Activated CD8-positive, alpha-beta T cell treated with anti-CD3 and anti-CD28 coated beads, Interleukin-2, amount 10 ng/mL, durations not matched to agents 7 days and 5 days (primary cell): ENCODE measurements at regions of chr5 and their contacts with region 1.

Region 1: DNA sequence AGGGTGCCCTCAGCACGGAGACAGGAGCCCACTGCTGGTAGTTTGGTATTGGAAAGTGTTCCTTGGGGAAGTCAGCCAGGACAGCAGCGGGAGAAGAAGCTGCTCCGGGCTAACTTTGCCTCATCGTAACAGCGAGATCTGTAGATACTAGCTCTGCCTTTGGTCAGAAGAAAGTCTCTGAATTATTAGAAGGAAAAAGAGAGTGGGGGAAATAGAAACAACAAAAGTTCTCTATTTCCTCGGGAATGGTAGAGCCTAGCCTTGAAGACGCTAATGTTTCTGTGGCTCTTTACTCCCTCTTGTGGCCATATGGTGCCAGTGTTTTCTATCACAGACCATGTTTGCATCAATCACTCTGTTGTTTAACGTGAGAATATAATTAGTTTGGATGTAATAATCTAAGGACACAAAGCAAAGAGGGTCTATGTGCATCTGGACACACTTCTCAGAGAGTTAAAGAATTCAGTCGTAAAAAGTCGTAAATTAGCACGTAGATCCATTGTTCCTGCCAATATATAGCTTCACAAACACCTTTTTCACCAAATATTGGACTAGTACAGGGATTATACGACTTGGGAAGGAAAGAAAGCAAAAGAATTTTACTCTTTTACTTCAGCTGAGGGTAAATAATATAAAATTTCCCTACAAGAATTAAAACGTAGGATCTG is 40.2 kb upstream of the HSD17B4 start:
- DNase-seq: peak; percentile 73
- ATAC-seq: peak; percentile 87
- H3K4me3 Mint-ChIP-seq: peak overlapping the region; percentile 72
- H3K27ac Mint-ChIP-seq: peak overlapping the region; percentile 0
- H3K4me1 Mint-ChIP-seq: peaks cover 24% of the 10 kb centered on the region
- H3K27me3 Mint-ChIP-seq: no peaks in the 10 kb centered on the region

Region 2: GRCh38 chr5:119031905-119032304 is 380.2 kb before region 1 on chr5:
- CTCF ChIA-PET with region 1: interaction called, 102 read pairs
- POLR2A ChIA-PET with region 1: no interaction called
- DNase-seq: no peak
- ATAC-seq: no peak
- H3K4me3 Mint-ChIP-seq: no peak overlapping the region
- H3K27ac Mint-ChIP-seq: peak overlapping the region; percentile 79
- H3K4me1 Mint-ChIP-seq: peaks cover 22% of the 10 kb centered on the region
- H3K27me3 Mint-ChIP-seq: no peaks in the 10 kb centered on the region

Region 3: DNA sequence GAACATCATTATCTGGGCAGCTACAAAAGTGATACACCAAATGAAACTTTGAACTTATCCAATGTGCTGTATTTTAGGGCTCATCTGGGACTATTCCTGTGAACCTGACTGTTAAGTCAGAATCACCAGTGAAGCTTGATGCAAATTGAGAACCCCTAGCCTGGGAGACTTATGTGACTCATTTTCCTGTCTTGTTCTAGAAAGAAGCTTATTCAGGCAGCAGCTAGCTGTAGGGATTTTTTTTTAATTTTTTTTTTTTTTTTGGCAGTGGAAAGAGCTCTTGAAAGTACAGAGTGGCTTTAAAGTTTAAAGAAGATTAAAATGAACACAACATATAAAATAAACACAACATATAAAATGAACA is 137.3 kb before region 1 on chr5:
- CTCF ChIA-PET with region 1: interaction called, 28 read pairs
- POLR2A ChIA-PET with region 1: no interaction called
- DNase-seq: no peak
- ATAC-seq: peak; percentile 35
- H3K4me3 Mint-ChIP-seq: peak overlapping the region; percentile 75
- H3K27ac Mint-ChIP-seq: peak overlapping the region; percentile 87
- H3K4me1 Mint-ChIP-seq: peaks cover 88% of the 10 kb centered on the region
- H3K27me3 Mint-ChIP-seq: peaks cover 2% of the 10 kb centered on the region

Region 4: GRCh38 chr5:119315516-119315949 is 96.5 kb before region 1 on chr5:
- CTCF ChIA-PET with region 1: interaction called, 90 read pairs
- POLR2A ChIA-PET with region 1: interaction called, 4 read pairs
- DNase-seq: peak; percentile 74
- ATAC-seq: peak; percentile 77
- H3K4me3 Mint-ChIP-seq: peak overlapping the region; percentile 40
- H3K27ac Mint-ChIP-seq: peak overlapping the region; percentile 87
- H3K4me1 Mint-ChIP-seq: peaks cover 94% of the 10 kb centered on the region
- H3K27me3 Mint-ChIP-seq: no peaks in the 10 kb centered on the region

Region 5: GRCh38 chr5:119347991-119348390 is 64.1 kb before region 1 on chr5:
- CTCF ChIA-PET with region 1: interaction called, 94 read pairs
- POLR2A ChIA-PET with region 1: no interaction called
- DNase-seq: no peak
- ATAC-seq: no peak
- H3K4me3 Mint-ChIP-seq: no peak overlapping the region
- H3K27ac Mint-ChIP-seq: no peak overlapping the region
- H3K4me1 Mint-ChIP-seq: peaks cover 88% of the 10 kb centered on the region
- H3K27me3 Mint-ChIP-seq: no peaks in the 10 kb centered on the region

Region 6: GRCh38 chr5:119378075-119378700 is 33.9 kb before region 1 on chr5:
- CTCF ChIA-PET with region 1: interaction called, 32 read pairs
- POLR2A ChIA-PET with region 1: no interaction called
- DNase-seq: no peak
- ATAC-seq: peak; percentile 58
- H3K4me3 Mint-ChIP-seq: peak overlapping the region; percentile 34
- H3K27ac Mint-ChIP-seq: peak overlapping the region; percentile 73
- H3K4me1 Mint-ChIP-seq: peaks cover 64% of the 10 kb centered on the region
- H3K27me3 Mint-ChIP-seq: no peaks in the 10 kb centered on the region

Region 7: GRCh38 chr5:119435436-119436132 is 23.5 kb after region 1 on chr5:
- CTCF ChIA-PET with region 1: interaction called, 34 read pairs
- POLR2A ChIA-PET with region 1: no interaction called
- DNase-seq: peak; percentile 80
- ATAC-seq: peak; percentile 80
- H3K4me3 Mint-ChIP-seq: no peak overlapping the region
- H3K27ac Mint-ChIP-seq: no peak overlapping the region
- H3K4me1 Mint-ChIP-seq: peaks cover 26% of the 10 kb centered on the region
- H3K27me3 Mint-ChIP-seq: peaks cover 17% of the 10 kb centered on the region